Right ventricle myocardium superior (tissue), 1 donor: ENCODE measurements at regions of chr4 and their contacts with region 1.

Region 1: DNA sequence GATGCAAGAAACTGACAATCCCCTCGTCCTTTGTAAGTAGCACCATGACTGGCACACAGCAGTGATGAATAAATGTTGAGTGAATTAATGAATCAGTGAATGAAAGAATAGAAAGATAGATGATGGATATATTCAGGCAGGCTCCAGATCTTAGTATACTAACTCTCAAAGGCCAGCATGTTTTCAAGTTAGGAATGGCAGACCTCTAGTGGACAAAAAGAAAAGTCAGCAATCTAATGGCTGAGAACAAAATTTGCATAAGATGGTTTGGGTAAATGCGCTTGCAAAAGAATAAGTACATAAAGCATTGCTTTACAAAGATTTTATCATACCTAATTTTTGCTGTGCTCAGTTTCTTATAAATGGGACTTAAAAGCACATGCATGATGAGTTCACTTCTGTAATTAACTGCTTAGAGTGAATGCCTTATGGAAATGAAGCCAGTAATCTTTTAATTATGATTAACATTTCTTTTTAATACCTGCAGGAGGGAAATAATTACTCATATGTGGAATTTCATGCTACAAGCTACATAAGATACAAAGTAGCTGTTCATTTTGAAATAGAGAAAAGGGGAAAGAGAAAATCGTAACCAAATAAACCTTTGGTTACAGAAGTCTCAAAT is 126.9 kb upstream of the GPRIN3 start:
- DNase-seq: no peak
- ATAC-seq: peak; percentile 69

Region 2: GRCh38 chr4:89158884-89159503 is 275.5 kb before region 1 on chr4:
- intact Hi-C with region 1: loop called (anchors 5 kb)
- DNase-seq: no peak
- ATAC-seq: peak; percentile 71

Region 3: GRCh38 chr4:89226665-89227574 is 207.6 kb before region 1 on chr4:
- intact Hi-C with region 1: loop called (anchors 2 kb)
- DNase-seq: peak; percentile 61
- ATAC-seq: peak; percentile 99

Region 4: GRCh38 chr4:89316931-89317366 is 117.5 kb before region 1 on chr4:
- intact Hi-C with region 1: loop called (anchors 10 kb)
- DNase-seq: no peak
- ATAC-seq: peak; percentile 49

Region 5: DNA sequence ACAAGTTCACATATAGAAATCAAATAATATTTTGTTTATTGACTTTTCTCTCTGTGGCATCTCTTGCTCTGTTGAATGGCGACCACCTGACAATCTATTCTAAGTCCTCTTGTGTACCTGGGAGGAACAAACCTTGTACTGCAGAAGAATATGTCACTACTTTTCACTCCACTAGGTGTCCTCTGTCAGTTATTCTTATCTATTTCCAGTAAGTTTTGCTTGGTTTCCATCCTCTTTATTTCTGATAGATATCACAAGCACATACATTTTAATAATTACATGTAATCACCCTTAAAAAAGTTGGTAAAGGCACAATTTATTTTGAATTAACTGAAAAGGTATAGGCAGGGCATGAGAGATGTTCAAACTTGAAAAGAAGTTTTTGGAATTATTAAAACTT is 164.1 kb after region 1 on chr4:
- intact Hi-C with region 1: no loop called
- DNase-seq: no peak
- ATAC-seq: no peak

Region 6: GRCh38 chr4:89674969-89675368 is 240.5 kb after region 1 on chr4:
- intact Hi-C with region 1: no loop called
- DNase-seq: no peak
- ATAC-seq: no peak

Region 7: DNA sequence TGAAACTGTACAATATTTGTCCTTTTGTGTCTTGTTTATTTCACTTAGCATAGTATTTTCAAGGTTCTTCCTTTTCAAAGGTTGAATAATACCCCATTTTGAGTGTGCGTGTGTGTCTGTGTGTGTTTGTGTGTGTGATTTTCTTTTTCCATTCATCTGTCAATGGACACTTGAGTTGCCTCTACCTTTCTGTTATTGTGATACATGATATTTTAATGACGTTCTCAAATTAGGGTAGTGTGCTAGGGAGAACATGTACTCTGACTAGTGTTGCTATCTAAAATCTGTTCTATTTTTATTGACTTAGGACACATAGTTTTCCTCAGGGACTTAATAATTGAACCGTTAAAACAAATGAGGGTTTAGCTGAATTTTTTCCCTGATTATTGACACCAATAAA is 470.0 kb after region 1 on chr4:
- intact Hi-C with region 1: loop called (anchors 5 kb)
- DNase-seq: no peak
- ATAC-seq: peak; percentile 57